B cell (primary cell): ENCODE measurements at regions of chr10 and their contacts with region 1.

Region 1: GRCh38 chr10:115171392-115171960 is 78.3 kb downstream of the ATRNL1 start:
- DNase-seq: no peak
- ATAC-seq: no peak
- H3K4me3 ChIP-seq: no peak overlapping the region
- H3K4me3 Mint-ChIP-seq: no peak overlapping the region
- H3K27ac ChIP-seq: no peak overlapping the region
- H3K27ac Mint-ChIP-seq: no peak overlapping the region
- H3K4me1 ChIP-seq: no peaks in the 10 kb centered on the region
- H3K4me1 Mint-ChIP-seq: no peaks in the 10 kb centered on the region
- H3K27me3 ChIP-seq: no peaks in the 10 kb centered on the region
- H3K27me3 Mint-ChIP-seq: peaks cover 4% of the 10 kb centered on the region
- CTCF ChIP-seq: peak; percentile 55

Region 2: GRCh38 chr10:115539142-115539762 is 367.8 kb after region 1 on chr10:
- CTCF ChIA-PET with region 1: no interaction called
- POLR2A ChIA-PET with region 1: no interaction called
- intact Hi-C with region 1: no loop called
- DNase-seq: no peak
- ATAC-seq: no peak
- H3K4me3 ChIP-seq: no peak overlapping the region
- H3K4me3 Mint-ChIP-seq: no peak overlapping the region
- H3K27ac ChIP-seq: no peak overlapping the region
- H3K27ac Mint-ChIP-seq: no peak overlapping the region
- H3K4me1 ChIP-seq: no peaks in the 10 kb centered on the region
- H3K4me1 Mint-ChIP-seq: no peaks in the 10 kb centered on the region
- H3K27me3 ChIP-seq: no peaks in the 10 kb centered on the region
- H3K27me3 Mint-ChIP-seq: no peaks in the 10 kb centered on the region
- CTCF ChIP-seq: no peak

Region 3: DNA sequence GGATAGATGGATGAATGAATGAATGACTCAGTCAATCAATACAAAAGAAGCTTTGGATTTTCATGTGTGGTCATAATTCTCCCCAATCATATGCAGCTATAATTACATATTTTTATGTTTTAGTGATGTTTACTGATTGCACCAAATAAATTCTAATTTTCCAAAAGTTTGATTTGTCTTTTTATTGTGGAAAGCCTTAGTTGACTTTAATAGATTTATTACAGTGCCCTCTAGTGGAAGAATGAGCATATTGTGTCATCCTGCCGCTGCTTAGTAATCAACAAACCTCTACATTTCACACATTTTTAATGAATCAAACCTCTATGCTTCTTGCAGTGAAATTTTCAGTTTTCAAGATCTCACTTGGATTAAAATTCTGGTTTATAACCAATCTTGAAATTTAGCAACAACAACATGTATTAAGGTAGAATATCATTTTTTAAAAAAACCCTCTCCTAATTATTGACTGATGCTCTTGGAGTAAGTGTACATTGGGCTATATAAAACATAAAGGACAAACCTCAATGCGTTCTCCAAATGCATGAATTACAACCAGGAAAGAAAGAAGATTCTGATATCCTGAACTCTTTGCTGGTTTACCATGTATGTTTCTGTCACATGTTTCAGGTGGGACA is 1318.7 kb after region 1 on chr10:
- CTCF ChIA-PET with region 1: no interaction called
- POLR2A ChIA-PET with region 1: no interaction called
- intact Hi-C with region 1: loop called (anchors 5 kb)
- DNase-seq: peak; percentile 6
- ATAC-seq: no peak
- H3K4me3 ChIP-seq: no peak overlapping the region
- H3K4me3 Mint-ChIP-seq: no peak overlapping the region
- H3K27ac ChIP-seq: no peak overlapping the region
- H3K27ac Mint-ChIP-seq: no peak overlapping the region
- H3K4me1 ChIP-seq: no peaks in the 10 kb centered on the region
- H3K4me1 Mint-ChIP-seq: no peaks in the 10 kb centered on the region
- H3K27me3 ChIP-seq: no peaks in the 10 kb centered on the region
- H3K27me3 Mint-ChIP-seq: no peaks in the 10 kb centered on the region
- CTCF ChIP-seq: peak; percentile 62